RWPE1 (cell line): ENCODE measurements at regions of chr22 and their contacts with region 1.

Region 1: DNA sequence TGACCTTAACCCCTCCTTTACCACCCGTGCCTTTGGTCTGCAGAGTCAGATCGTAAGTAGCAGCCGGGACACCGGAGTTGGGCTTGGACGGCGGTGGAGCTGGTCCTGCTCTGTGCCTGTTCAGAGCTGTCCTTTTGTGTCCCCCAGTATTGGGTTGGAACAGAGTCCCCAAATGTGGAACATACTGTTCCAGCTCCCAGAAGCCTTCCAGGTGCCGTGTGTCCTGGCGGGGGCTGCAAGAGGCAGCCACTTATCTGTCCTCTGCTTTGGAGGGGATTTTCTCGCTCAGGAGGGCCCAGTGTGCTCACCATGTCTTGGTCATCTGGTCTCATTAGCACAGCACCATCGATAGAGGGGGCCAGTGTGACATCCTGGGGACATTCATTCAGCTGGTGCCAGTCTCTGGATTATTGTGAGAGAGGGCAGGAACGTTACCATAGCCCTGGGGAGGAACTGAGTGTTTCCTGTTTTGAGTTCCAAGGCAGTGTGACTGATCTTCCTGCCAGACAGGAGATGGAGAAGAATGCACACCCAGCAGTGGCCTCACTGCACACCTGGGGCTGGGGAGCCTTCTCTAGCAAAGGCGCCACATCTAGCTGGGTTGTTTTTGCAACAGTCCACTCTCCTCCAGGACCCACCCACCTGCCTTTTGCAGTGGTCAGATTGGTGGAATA is 12.4 kb downstream of the CRELD2 start:
- DNase-seq: no peak
- H3K27ac ChIP-seq: peak overlapping the region; percentile 90
- CTCF ChIP-seq: peak; percentile 63

Region 2: DNA sequence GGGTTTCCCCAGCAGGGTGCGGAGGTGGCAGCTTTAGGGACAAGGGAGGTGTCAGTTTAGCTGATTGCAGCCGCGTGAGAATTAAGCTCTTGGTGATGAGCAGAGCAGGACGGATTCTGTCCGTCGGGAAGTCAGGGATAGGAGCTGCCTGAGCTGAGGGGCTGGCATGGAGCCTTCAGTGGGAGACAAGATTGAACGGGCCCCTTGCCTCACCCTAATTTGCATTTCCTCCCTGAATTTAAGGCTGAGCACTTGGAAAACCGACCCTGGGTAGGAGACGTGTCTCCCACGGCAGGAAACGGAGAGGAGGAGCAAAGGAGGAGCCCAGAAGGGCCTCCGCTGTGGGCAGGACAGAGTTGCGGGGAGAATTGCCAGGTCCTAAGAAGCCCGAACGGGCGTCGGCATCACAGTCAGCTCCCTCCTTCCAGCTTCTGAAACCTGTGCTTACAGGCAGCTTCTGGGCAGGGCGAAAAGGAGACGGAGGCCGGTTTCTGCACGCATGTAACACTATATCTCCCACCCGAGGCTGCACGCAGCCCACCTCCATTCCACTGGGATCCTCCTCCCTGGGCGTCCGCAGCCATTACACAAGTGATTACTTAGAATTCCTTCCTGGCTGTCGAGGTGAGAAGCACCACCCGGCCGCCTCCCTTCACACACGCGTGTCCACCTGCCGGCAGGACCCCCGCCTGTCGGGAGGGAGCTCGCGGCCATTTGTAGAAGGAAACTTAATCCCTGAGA is 449.0 kb before region 1 on chr22:
- CTCF ChIA-PET with region 1: no interaction called
- POLR2A ChIA-PET with region 1: no interaction called
- DNase-seq: no peak
- H3K27ac ChIP-seq: no peak overlapping the region
- CTCF ChIP-seq: no peak

Region 3: DNA sequence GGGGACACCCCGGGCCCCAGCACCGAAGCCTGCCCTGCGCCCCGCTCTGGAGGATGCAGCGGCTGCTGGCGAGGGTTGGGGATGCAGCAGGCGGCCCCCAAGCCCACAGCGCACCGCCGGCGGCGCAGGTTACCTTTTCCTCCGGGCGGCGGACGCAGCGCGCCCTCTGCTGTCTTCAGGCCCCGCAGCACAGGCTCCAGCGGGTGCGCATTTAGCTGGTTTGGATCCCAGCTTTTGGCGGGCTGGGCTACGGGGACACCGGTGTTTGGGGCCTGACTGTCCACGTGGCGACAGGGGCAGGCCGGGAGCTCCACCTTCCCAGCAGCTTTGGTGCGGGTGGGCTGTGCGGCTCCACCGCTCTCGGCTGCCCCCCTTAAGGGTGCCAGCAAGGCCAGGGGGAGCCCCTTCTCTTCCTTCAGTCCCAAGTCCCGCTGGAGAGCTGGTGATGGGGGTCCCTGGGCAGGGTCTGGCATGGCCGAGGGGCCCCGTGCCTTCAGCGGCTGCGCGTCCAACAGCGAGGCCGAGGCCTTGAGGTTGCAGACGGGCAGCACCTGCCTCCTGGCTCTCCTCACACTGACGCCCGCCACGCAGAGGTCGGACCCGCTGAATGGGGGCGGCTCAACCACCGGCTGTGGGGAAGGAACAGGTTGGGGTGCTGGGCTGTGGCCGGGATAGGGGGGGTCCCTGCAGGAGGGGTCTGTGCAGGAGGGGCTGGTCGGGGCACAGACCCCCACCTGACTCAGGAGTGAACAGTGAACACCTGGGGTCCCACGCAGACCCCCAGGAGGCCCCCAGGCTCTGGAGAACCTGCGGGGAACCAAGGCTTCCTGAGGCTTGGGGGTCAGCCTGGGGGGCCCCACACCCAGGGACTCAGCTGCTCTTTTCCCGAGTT is 99.7 kb after region 1 on chr22:
- CTCF ChIA-PET with region 1: interaction called, 12 read pairs
- POLR2A ChIA-PET with region 1: interaction called, 3 read pairs
- DNase-seq: peak; percentile 69
- H3K27ac ChIP-seq: no peak overlapping the region
- CTCF ChIP-seq: peak; percentile 91